Heart left ventricle (tissue), 16 donors: ENCODE measurements at regions of chr5 and their contacts with region 1.

Region 1: GRCh38 chr5:116557669-116558271 is 16.9 kb downstream of the SEMA6A start:
- DNase-seq: no peak
- ATAC-seq: peak in 1 of 4 donors; percentile 43
- H3K4me3 ChIP-seq: no peak overlapping the region
- H3K27ac ChIP-seq: no peak overlapping the region
- H3K4me1 ChIP-seq: peaks cover 0 to 32% (median 5%) of the 10 kb centered on the region in 12 donors
- H3K27me3 ChIP-seq: no peaks in the 10 kb centered on the region
- CTCF ChIP-seq: peak; percentile 32 to 68 (median 53)
- POLR2A ChIP-seq: no peak

Region 2: DNA sequence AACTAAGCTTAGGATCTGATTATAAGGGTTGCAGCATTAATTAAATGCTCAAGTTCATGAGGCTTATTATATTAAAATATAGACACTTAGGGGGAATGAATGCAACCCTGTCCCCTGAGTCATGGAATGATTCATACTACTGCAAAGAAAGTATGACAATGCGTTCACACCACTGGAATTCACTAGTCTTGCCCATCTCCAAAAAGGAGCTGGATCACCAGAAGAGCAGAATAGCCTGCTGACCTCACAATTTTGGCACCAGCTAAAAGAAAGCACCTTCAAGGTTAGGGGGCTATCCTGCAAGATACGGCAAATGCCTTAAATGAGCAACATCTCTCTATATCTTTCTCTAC is 899.9 kb before region 1 on chr5:
- intact Hi-C with region 1: no loop called
- DNase-seq: no peak
- ATAC-seq: no peak
- H3K4me3 ChIP-seq: no peak overlapping the region
- H3K27ac ChIP-seq: no peak overlapping the region
- H3K4me1 ChIP-seq: no peaks in the 10 kb centered on the region
- H3K27me3 ChIP-seq: peaks cover 0 to 4% (median 0%) of the 10 kb centered on the region in 9 donors
- CTCF ChIP-seq: no peak
- POLR2A ChIP-seq: no peak

Region 3: GRCh38 chr5:116115163-116115562 is 442.6 kb before region 1 on chr5:
- intact Hi-C with region 1: loop called in 1 of 10 experiments (anchors 5 kb)
- DNase-seq: no peak
- ATAC-seq: peak in 3 of 4 donors; percentile 12 to 41 (median 18)
- H3K4me3 ChIP-seq: no peak overlapping the region
- H3K27ac ChIP-seq: no peak overlapping the region
- H3K4me1 ChIP-seq: peaks cover 0 to 4% (median 0%) of the 10 kb centered on the region in 12 donors
- H3K27me3 ChIP-seq: no peaks in the 10 kb centered on the region
- CTCF ChIP-seq: no peak
- POLR2A ChIP-seq: no peak

Region 4: GRCh38 chr5:116144103-116144502 is 413.7 kb before region 1 on chr5:
- intact Hi-C with region 1: loop called in 3 of 10 experiments (anchors 10 kb)
- DNase-seq: no peak
- ATAC-seq: no peak
- H3K4me3 ChIP-seq: no peak overlapping the region
- H3K27ac ChIP-seq: no peak overlapping the region
- H3K4me1 ChIP-seq: peaks cover 0 to 4% (median 0%) of the 10 kb centered on the region in 12 donors
- H3K27me3 ChIP-seq: no peaks in the 10 kb centered on the region
- CTCF ChIP-seq: no peak
- POLR2A ChIP-seq: no peak

Region 5: DNA sequence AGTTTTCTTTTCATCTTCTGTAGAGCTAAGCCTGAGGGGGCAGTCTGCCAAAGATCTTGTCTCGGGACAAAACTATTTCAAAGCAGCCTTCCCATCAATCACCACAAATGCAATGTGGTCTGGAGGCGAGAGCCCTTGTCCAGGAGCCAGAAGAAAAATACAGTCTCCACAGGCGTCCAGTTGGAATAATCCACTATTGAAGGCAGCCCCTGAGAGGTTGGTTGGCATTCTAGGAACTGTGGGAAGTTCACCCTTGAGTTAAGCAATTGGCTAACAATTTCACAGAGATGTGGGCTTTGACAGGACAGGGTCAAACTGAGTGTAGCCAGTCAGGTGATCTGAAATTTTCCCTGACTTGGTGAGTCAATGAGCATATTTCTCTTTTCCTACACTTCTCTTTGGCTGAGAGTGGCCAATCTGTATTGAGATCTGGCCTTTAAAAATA is 55.1 kb before region 1 on chr5:
- intact Hi-C with region 1: no loop called
- DNase-seq: no peak
- ATAC-seq: peak in 1 of 4 donors; percentile 26
- H3K4me3 ChIP-seq: no peak overlapping the region
- H3K27ac ChIP-seq: peak overlapping the region in 1 of 12 donors; percentile 5
- H3K4me1 ChIP-seq: peaks cover 0 to 21% (median 6%) of the 10 kb centered on the region in 12 donors
- H3K27me3 ChIP-seq: no peaks in the 10 kb centered on the region
- CTCF ChIP-seq: no peak
- POLR2A ChIP-seq: no peak

Region 6: DNA sequence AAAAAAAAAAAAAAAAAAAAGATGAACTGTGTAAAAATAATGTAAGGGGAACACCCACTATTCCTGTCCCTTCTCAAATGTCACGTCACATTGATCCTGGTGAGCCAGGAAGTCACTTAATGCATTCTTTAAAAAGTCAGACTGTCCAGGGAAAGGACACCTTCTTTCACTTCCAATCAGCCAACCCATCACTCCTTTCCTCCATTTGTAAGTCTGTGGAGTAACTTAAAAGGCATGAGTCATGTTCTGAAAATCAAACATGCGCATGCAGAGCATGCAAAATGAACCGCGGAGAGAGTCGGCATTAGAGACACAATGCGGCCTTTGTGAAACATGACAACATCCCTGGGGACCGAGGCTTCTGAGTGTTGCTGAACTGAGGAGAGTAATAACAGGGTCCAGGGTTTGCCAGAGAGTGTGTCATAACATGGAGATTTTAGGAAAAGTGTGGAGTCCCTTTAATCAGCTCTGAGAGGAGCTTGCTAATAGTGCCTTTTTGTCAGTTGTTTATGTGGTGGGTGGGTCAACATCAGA is 94.5 kb after region 1 on chr5:
- intact Hi-C with region 1: no loop called
- DNase-seq: peak in 4 of 5 donors; percentile 57 to 86 (median 75)
- ATAC-seq: peak in 3 of 4 donors; percentile 93 to 97 (median 94)
- H3K4me3 ChIP-seq: no peak overlapping the region
- H3K27ac ChIP-seq: peak overlapping the region in 5 of 12 donors; percentile 11 to 47 (median 30)
- H3K4me1 ChIP-seq: peaks cover 0 to 18% (median 1%) of the 10 kb centered on the region in 12 donors
- H3K27me3 ChIP-seq: no peaks in the 10 kb centered on the region
- CTCF ChIP-seq: no peak
- POLR2A ChIP-seq: no peak